ENCODE measurements at regions of chr10 and their contacts with region 1.

Region 1: GRCh38 chr10:91694170-91694794 is 61.4 kb upstream of the PPP1R3C start:
- DNase-seq: peak in 2 of 7 donors; percentile 53 to 55
- H3K4me3 ChIP-seq: no peak overlapping the region
- H3K27ac ChIP-seq: no peak overlapping the region
- H3K4me1 ChIP-seq: no peaks in the 10 kb centered on the region
- H3K27me3 ChIP-seq: no peaks in the 10 kb centered on the region
- CTCF ChIP-seq: peak; percentile 60 to 72 (median 66)
- POLR2A ChIP-seq: no peak

Region 2: DNA sequence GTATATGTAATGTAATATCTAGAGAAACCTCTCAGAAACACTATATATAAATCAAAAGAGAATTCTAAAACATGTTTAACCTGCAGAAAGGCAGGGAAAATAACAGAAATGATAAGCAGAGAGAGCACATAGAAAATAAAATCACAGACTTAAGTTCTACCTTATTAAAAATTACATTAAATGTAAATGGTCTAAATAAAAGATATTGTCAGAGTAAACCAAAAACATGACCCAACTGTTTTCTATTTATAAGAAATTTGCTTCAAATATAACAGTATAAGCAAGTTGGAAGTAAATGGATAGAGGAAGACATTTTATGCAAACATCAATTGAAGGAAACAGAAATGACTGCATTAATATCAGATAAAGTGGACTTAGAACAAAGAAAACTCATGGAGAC is 240.7 kb before region 1 on chr10:
- intact Hi-C with region 1: no loop called
- DNase-seq: no peak
- H3K4me3 ChIP-seq: no peak overlapping the region
- H3K27ac ChIP-seq: no peak overlapping the region
- H3K4me1 ChIP-seq: no peaks in the 10 kb centered on the region
- H3K27me3 ChIP-seq: no peaks in the 10 kb centered on the region
- CTCF ChIP-seq: no peak
- POLR2A ChIP-seq: no peak

Region 3: DNA sequence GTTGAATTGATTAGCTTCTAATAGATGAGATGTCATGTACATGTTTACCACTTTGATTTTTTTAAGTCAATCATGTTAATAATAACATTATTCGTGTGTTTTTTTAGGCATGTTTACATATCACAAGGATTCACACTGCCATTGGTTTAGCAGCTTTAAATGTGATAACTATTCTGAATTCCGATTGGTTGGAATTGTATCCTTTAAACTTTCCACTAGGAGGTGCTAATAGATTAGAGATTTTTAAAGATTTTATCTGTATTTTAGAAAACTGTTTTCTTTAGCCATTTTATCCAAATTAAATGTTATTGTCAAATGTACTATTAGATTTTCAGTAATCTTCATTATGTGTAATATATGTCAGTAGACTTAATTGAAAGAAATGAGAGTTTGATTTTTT is 201.0 kb before region 1 on chr10:
- intact Hi-C with region 1: loop called in 1 of 2 experiments (anchors 10 kb)
- DNase-seq: no peak
- H3K4me3 ChIP-seq: no peak overlapping the region
- H3K27ac ChIP-seq: no peak overlapping the region
- H3K4me1 ChIP-seq: no peaks in the 10 kb centered on the region
- H3K27me3 ChIP-seq: no peaks in the 10 kb centered on the region
- CTCF ChIP-seq: peak; percentile 46 to 74 (median 54)
- POLR2A ChIP-seq: no peak

Measured in adrenal gland (tissue), 19 donors.